Thyroid gland (tissue), 4 donors: ENCODE measurements at regions of chr5 and their contacts with region 1.

Region 1: GRCh38 chr5:56481428-56482357 is 248.6 kb upstream of the ANKRD55 start:
- DNase-seq: peak; percentile 70 to 74
- H3K4me3 ChIP-seq: peak overlapping the region; percentile 22 to 67 (median 48)
- H3K27ac ChIP-seq: peak overlapping the region; percentile 95 to 99 (median 99)
- H3K4me1 ChIP-seq: peaks cover 25 to 31% of the 10 kb centered on the region in 2 donors
- H3K27me3 ChIP-seq: no peaks in the 10 kb centered on the region
- CTCF ChIP-seq: peak in 2 of 6 experiments; percentile 15 to 19
- POLR2A ChIP-seq: peak in 1 of 2 donors; percentile 66

Region 2: DNA sequence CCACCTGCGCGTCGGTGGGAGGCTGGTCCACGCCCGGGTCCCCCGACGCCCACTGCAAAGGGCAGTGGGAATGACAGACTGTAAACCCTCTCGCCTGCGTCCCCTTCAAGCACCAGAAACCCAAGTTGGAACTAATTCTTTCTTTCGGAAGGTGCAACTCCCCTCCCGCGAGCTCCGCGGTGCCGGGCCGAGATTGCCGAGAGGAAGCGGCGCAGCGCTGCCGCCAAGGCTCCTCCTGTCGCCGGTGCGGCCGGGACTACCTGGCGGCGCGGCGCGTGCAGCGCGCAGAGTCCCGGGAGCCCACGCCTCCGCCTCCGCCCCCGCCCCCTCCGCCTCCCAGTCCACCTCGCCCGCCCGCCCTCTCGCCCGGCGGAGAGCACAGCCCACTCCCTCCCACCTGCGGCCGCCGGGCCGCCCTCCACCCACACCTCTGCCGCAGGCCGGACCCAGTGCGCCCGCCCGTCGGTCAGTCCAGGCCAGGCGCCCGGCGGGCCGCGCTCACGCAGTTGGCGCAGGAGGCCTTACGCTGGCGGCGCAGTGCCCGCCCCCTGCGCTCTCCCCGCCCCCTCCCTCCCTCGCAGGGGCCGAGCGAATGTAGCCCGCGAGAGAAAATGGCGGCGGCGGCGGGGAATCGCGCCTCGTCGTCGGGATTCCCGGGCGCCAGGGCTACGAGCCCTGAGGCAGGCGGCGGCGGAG is 333.4 kb after region 1 on chr5 and contains the start of gene MAP3K1:
- intact Hi-C with region 1: loop called (anchors 10 kb)
- DNase-seq: peak; percentile 94
- H3K4me3 ChIP-seq: peak within 1 kb of the TSS; percentile 91 to 95 (median 94)
- H3K27ac ChIP-seq: peak within 1 kb of the TSS; percentile 98 to 99 (median 98)
- H3K4me1 ChIP-seq: peaks cover 10 to 21% of the 10 kb centered on the region in 2 donors
- H3K27me3 ChIP-seq: no peaks in the 10 kb centered on the region
- CTCF ChIP-seq: peak in 2 of 6 experiments; percentile 31 to 39
- POLR2A ChIP-seq: peak; percentile 37 to 86
- total RNA-seq, gene MAP3K1: 56.9 to 113 (median 66.4) TPM

Region 3: DNA sequence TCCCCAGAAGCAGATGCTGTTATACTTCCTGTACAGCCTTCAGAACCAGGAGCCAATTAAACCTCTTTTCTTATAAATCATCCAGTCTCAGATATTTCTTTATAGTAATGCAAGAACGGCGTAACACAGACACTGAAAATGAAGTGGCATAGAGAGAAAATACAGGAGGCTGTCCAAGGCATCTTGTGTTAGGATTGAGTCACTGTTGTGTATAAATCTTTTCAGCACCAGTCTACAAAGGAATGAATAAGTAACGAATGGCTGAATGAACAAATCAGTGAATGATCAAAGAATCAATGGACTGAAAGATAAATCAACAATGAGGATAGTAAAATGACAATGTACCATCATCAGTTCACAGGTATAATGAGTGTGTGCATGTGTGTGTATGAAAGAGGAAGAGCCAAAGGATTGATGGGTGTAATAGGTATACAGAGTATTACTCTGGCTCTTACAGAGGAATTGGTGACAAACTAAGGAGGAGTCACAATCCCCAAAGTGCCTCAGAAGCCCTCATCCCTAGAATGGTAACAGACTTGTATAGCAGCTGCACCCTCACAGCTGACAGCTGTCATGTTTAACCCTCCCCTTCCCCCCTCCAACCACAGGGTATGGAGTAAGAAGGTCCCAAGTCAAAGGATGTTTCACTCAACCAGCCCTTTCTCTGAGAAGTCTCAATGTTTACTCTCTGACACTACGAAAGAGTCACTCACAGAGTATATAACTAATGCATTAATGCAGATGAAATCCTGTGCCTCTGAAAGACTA is 500.0 kb after region 1 on chr5:
- intact Hi-C with region 1: no loop called
- DNase-seq: no peak
- H3K4me3 ChIP-seq: no peak overlapping the region
- H3K27ac ChIP-seq: no peak overlapping the region
- H3K4me1 ChIP-seq: no peaks in the 10 kb centered on the region
- H3K27me3 ChIP-seq: no peaks in the 10 kb centered on the region
- CTCF ChIP-seq: no peak
- POLR2A ChIP-seq: no peak